Mammary epithelial cell (primary cell): ENCODE measurements at regions of chr7 and their contacts with region 1.

Region 1: DNA sequence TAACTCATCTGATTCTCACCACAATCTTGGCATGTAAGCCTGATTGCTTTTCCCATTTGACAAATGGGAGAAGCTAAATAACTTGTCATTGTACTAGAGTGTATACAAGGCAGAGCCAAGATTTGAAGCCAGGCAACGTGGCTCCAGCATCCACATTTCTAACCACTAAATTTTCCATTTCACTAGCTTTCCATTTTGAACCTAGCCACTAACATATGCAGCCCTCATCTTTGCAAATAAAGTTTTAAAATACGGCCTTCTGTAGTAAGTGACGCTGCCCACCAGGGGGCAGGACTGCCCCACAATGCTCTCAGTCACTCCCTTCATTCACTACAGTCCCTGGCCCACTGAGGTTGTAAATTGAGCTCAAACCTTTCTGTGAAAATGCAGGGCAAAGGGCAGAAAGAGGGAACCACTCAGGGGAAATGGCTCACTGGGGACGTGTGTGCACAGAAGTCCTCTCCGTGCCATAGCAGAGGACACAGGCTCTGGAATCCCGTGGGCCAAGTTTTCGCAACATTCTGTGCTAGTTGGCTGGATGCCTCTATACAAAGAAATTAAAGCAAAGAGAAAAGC is 315.7 kb downstream of the TNS3 start:
- DNase-seq: peak; percentile 33
- H3K4me3 ChIP-seq: no peak overlapping the region
- H3K27ac ChIP-seq: no peak overlapping the region
- H3K4me1 ChIP-seq: peaks cover 2% of the 10 kb centered on the region
- H3K27me3 ChIP-seq: no peaks in the 10 kb centered on the region
- CTCF ChIP-seq: peak; percentile 92 to 96

Region 2: DNA sequence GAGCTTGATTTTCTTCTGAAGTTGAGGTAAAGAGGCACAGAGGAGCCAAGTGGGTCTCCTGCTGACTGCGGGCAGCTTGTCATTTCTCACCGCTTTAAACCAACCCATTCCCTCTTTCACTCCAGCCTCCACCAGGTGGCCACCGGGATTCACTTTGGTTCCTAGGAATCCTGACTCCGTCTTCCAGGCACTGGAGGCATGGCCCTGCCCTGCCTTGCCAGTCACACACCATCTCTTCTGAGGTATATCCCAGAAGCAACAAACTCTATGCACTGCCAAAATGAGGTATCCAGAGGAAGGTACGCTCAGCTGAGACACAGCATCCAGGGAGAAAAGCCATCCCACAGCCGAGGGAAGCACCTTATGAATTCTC is 34.9 kb after region 1 on chr7:
- CTCF ChIA-PET with region 1: interaction called, 3 read pairs
- dilution Hi-C with region 1: no loop called
- in situ Hi-C with region 1: no loop called
- intact Hi-C with region 1: loop called (anchors 1 kb)
- DNase-seq: no peak
- H3K4me3 ChIP-seq: no peak overlapping the region
- H3K27ac ChIP-seq: no peak overlapping the region
- H3K4me1 ChIP-seq: peaks cover 4% of the 10 kb centered on the region
- H3K27me3 ChIP-seq: no peaks in the 10 kb centered on the region
- CTCF ChIP-seq: peak; percentile 5 to 36

Region 3: GRCh38 chr7:47337531-47337930 is 71.3 kb after region 1 on chr7:
- CTCF ChIA-PET with region 1: interaction called, 6 read pairs
- dilution Hi-C with region 1: no loop called
- in situ Hi-C with region 1: no loop called
- intact Hi-C with region 1: loop called (anchors 1 kb)
- DNase-seq: no peak
- H3K4me3 ChIP-seq: no peak overlapping the region
- H3K27ac ChIP-seq: no peak overlapping the region
- H3K4me1 ChIP-seq: peaks cover 27% of the 10 kb centered on the region
- H3K27me3 ChIP-seq: no peaks in the 10 kb centered on the region
- CTCF ChIP-seq: peak; percentile 5 to 40

Region 4: GRCh38 chr7:47435889-47436312 is 169.7 kb after region 1 on chr7:
- CTCF ChIA-PET with region 1: interaction called, 27 read pairs
- dilution Hi-C with region 1: no loop called
- in situ Hi-C with region 1: loop called (anchors 10 kb)
- intact Hi-C with region 1: loop called (anchors 1 kb)
- DNase-seq: peak; percentile 56
- H3K4me3 ChIP-seq: no peak overlapping the region
- H3K27ac ChIP-seq: no peak overlapping the region
- H3K4me1 ChIP-seq: no peaks in the 10 kb centered on the region
- H3K27me3 ChIP-seq: no peaks in the 10 kb centered on the region
- CTCF ChIP-seq: peak; percentile 70 to 73

Region 5: DNA sequence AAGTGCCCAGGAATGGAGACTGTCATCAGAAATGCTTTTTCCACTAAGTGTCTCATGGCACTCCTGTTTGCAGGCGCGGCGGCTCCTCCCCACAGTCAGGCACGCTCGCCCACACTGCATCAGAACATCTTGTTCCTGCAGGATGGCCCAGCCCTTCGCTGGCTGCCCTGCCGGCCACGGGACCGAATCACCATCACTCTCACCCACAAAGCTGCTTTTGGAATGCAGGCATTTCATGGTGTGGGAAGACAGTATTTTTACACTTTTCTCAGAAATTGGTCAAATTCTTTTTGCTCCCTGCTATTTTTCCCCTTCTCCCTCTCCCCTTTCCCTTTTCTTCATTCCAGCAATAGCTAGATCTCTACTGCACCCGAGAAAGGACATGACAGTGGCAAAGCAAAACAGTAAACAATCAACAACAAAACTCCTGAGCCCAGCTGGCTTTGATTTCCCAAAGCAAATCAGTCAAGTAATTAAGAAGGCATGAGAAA is 491.7 kb after region 1 on chr7:
- CTCF ChIA-PET with region 1: no interaction called
- dilution Hi-C with region 1: no loop called
- in situ Hi-C with region 1: no loop called
- intact Hi-C with region 1: loop called (anchors 5 kb)
- DNase-seq: peak; percentile 67
- H3K4me3 ChIP-seq: no peak overlapping the region
- H3K27ac ChIP-seq: peak overlapping the region; percentile 94
- H3K4me1 ChIP-seq: peaks cover 29% of the 10 kb centered on the region
- H3K27me3 ChIP-seq: no peaks in the 10 kb centered on the region
- CTCF ChIP-seq: no peak

Region 6: GRCh38 chr7:47818796-47819606 is 552.8 kb after region 1 on chr7:
- CTCF ChIA-PET with region 1: interaction called, 4 read pairs
- dilution Hi-C with region 1: no loop called
- in situ Hi-C with region 1: loop called (anchors 10 to 25 kb)
- intact Hi-C with region 1: loop called (anchors 1 kb)
- DNase-seq: peak; percentile 46
- H3K4me3 ChIP-seq: no peak overlapping the region
- H3K27ac ChIP-seq: no peak overlapping the region
- H3K4me1 ChIP-seq: no peaks in the 10 kb centered on the region
- H3K27me3 ChIP-seq: no peaks in the 10 kb centered on the region
- CTCF ChIP-seq: peak; percentile 94 to 100

Region 7: GRCh38 chr7:48154792-48155413 is 888.7 kb after region 1 on chr7:
- CTCF ChIA-PET with region 1: no interaction called
- dilution Hi-C with region 1: no loop called
- in situ Hi-C with region 1: no loop called
- intact Hi-C with region 1: loop called (anchors 10 kb)
- DNase-seq: peak; percentile 38
- H3K4me3 ChIP-seq: no peak overlapping the region
- H3K27ac ChIP-seq: no peak overlapping the region
- H3K4me1 ChIP-seq: no peaks in the 10 kb centered on the region
- H3K27me3 ChIP-seq: no peaks in the 10 kb centered on the region
- CTCF ChIP-seq: peak; percentile 87 to 89